Aorta (tissue), 5 donors: ENCODE measurements at regions of chr9 and their contacts with region 1.

Region 1: GRCh38 chr9:115649991-115650472 is 503.6 kb upstream of the PAPPA start:
- DNase-seq: peak; percentile 78 to 86
- ATAC-seq: peak; percentile 92
- H3K4me3 ChIP-seq: no peak overlapping the region
- H3K27ac ChIP-seq: peak overlapping the region; percentile 75 to 84
- H3K4me1 ChIP-seq: peaks cover 0 to 9% of the 10 kb centered on the region in 2 donors
- H3K27me3 ChIP-seq: no peaks in the 10 kb centered on the region

Region 2: DNA sequence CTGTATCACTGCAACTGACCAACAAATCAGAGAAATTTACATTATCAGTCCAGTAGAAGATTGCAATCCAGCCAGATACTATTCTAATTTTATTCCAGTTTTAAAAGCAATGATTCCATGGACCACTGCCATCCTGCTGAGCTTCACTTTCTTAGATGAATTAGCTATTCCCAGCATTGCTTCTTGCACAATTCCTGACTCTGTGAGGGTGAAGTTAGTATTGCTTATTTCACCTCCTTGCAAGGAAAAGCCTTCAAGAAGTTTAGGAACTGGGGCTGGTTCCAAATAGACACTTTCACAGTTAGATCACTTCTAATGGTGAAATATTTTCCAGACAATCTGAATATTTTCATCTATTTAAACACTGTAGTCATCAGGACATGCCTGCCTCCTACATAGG is 193.5 kb before region 1 on chr9:
- intact Hi-C with region 1: no loop called
- DNase-seq: no peak
- ATAC-seq: peak; percentile 57
- H3K4me3 ChIP-seq: no peak overlapping the region
- H3K27ac ChIP-seq: no peak overlapping the region
- H3K4me1 ChIP-seq: peaks cover 6 to 14% of the 10 kb centered on the region in 2 donors
- H3K27me3 ChIP-seq: no peaks in the 10 kb centered on the region

Region 3: GRCh38 chr9:115615821-115616665 is 34.0 kb before region 1 on chr9:
- intact Hi-C with region 1: no loop called
- DNase-seq: no peak
- ATAC-seq: no peak
- H3K4me3 ChIP-seq: no peak overlapping the region
- H3K27ac ChIP-seq: no peak overlapping the region
- H3K4me1 ChIP-seq: no peaks in the 10 kb centered on the region
- H3K27me3 ChIP-seq: no peaks in the 10 kb centered on the region

Region 4: DNA sequence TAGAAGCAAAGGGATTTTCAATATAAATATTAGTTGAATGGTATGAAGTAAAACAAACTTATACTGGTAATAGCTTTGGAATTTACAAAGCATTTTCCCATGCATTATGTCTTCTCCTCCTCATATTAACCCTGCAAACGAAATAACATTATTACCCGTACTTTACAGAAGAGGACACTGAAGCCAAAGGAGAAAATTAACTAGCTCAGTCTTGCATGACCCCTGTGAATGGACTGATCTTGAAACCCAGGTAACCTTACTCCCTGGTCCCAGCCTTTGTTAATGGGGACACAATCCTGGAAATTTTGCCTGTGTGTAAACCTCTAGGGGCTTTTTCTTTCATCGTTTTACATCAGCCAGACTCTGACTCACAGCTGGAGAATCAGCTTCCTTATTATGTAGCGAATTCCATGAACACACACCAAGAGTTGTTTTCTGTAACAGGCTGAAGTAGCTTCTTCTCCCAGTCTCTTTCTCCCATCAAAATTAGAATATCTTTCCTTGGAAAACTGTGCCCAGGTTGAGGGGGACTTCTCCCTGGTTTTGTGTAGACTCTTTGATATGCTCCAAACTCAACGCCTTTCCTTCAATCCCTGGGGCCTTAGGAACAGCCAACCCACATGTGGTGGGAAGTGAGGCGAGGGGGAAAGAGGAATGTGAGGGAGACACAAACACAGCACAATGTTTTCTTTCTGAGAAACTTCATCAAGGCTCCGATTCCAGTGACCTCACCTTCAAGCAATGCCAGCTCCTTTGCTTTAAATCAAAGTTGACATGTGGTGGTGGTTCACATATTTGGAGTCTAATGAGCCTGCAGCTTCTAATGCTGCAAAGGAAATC is 22.7 kb after region 1 on chr9:
- intact Hi-C with region 1: loop called in 1 of 2 experiments (anchors 1 kb)
- DNase-seq: no peak
- ATAC-seq: peak; percentile 83
- H3K4me3 ChIP-seq: no peak overlapping the region
- H3K27ac ChIP-seq: peak overlapping the region; percentile 65 to 98
- H3K4me1 ChIP-seq: peaks cover 2 to 9% of the 10 kb centered on the region in 2 donors
- H3K27me3 ChIP-seq: no peaks in the 10 kb centered on the region